ENCODE measurements at regions of chr7 and their contacts with region 1.

Region 1: GRCh38 chr7:29189743-29190201 is 4.8 kb upstream of the CHN2 start:
- DNase-seq: no peak
- H3K4me3 ChIP-seq: no peak overlapping the region
- CTCF ChIP-seq: peak; percentile 75

Region 2: GRCh38 chr7:28748933-28749584 is 440.7 kb before region 1 on chr7:
- CTCF ChIA-PET with region 1: no interaction called
- POLR2A ChIA-PET with region 1: no interaction called
- DNase-seq: no peak
- H3K4me3 ChIP-seq: no peak overlapping the region
- CTCF ChIP-seq: no peak

Region 3: DNA sequence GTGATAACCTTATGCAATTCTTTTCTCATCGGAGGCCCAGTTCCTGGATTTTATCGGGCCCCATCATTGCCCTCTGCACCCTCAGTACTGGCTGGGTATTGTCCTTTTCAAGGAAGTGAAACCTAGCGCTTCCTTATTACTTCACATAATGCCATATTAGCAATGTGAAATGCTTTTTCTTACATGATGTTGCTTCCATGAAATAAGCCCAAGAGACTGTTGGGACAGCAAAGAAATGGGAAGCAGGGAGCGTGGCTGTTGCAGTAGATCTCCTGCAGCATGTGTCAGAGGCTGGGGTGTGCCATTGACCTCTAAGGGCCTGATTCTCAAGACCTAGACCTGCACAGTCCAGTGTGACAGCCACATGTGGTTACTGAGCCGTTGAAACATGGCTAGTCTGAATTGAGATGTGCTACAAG is 12.9 kb after region 1 on chr7:
- CTCF ChIA-PET with region 1: interaction called, 18 read pairs
- POLR2A ChIA-PET with region 1: no interaction called
- DNase-seq: no peak
- H3K4me3 ChIP-seq: no peak overlapping the region
- CTCF ChIP-seq: no peak